ENCODE measurements at regions of chr20 and their contacts with region 1.

Region 1: DNA sequence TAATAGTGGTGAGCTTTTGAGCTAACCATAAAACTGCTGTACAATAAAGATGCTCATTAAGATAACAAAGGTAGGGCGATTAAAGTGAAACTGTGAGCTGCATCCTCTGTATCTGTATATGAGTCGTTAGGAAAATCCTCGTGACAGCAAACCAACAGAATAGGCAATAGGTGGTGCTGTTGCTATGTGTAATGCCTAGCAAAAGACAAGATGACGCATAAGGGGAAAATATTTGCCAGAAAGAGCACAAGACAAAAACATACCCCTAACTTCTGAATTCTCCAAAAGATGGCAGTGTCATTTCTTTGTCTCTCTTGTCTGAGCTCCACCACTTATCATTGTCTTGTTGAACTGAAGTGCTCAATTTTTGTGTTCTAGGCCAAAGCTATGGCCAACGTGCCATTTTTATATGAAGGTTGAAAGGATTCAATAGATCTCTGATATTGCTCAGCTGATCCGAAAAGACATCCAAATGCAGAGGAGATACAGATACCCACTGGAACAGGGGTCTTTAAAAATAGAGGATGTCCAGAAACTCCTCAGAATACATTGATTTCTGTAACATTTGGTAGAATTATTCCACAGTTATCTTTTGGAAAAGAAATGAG is 56.3 kb upstream of the ANKEF1 start:
- DNase-seq: no peak
- H3K4me3 ChIP-seq: no peak overlapping the region
- H3K27ac ChIP-seq: no peak overlapping the region
- H3K4me1 ChIP-seq: no peaks in the 10 kb centered on the region
- H3K27me3 ChIP-seq: no peaks in the 10 kb centered on the region
- CTCF ChIP-seq: peak in 2 of 3 experiments; percentile 78 to 79; a peak in 3 of 4 replicates
- EP300 ChIP-seq: no peak
- POLR2A ChIP-seq: no peak
- RAD21 ChIP-seq: peak; percentile 96 to 97

Region 2: GRCh38 chr20:9829835-9830234 is 148.7 kb before region 1 on chr20:
- CTCF ChIA-PET with region 1: no interaction called
- POLR2A ChIA-PET with region 1: no interaction called
- DNase-seq: peak in 1 of 2 experiments; percentile 45
- H3K4me3 ChIP-seq: no peak overlapping the region
- H3K27ac ChIP-seq: no peak overlapping the region
- H3K4me1 ChIP-seq: peaks cover 0 to 3% (median 1%) of the 10 kb centered on the region in 4 experiments; a peak in 4 of 7 replicates
- H3K27me3 ChIP-seq: no peaks in the 10 kb centered on the region
- CTCF ChIP-seq: no peak
- EP300 ChIP-seq: no peak
- POLR2A ChIP-seq: no peak
- RAD21 ChIP-seq: no peak

Region 3: DNA sequence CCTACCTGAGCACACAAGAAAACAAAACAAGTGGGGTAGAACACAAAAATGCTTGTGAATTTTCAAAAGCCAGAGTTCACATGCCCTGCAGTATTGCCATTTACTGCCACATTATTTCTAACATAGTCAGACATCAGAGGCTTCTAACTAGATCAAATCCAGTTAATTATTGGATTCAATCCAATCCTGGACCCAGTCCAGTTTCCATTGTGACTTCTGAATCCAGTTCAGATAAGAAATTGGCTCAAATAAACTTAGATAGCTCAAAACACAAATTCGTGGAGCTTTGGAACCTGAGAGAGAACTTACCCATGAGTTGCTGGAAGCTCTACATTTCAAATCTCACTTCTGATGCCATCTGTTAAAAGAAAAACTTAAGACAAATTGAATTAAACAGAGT is 28.9 kb before region 1 on chr20:
- CTCF ChIA-PET with region 1: interaction called, 10 read pairs
- POLR2A ChIA-PET with region 1: no interaction called
- DNase-seq: no peak
- H3K4me3 ChIP-seq: no peak overlapping the region
- H3K27ac ChIP-seq: no peak overlapping the region
- H3K4me1 ChIP-seq: no peaks in the 10 kb centered on the region
- H3K27me3 ChIP-seq: no peaks in the 10 kb centered on the region
- CTCF ChIP-seq: no peak
- EP300 ChIP-seq: no peak
- POLR2A ChIP-seq: no peak
- RAD21 ChIP-seq: no peak

Region 4: DNA sequence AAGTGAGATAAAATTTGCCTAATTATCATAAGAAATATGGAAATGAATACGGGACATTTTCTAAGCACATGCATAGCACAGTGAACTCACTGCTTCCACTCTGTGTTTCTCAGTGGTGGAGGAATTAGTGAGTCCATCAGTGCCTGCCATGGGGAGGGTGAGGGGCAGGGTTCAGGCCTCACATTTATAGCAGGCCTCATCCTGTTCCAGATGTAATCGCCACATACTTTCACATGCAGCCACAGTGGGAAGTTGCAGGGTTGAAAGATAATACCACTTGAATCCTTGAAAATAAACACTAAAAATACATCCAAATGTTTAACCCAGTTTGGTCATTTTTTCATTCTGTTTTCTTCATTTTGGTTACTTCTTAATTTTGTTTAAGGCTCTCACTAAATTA is 26.4 kb after region 1 on chr20:
- CTCF ChIA-PET with region 1: interaction called, 11 read pairs
- POLR2A ChIA-PET with region 1: no interaction called
- DNase-seq: no peak
- H3K4me3 ChIP-seq: no peak overlapping the region
- H3K27ac ChIP-seq: no peak overlapping the region
- H3K4me1 ChIP-seq: peaks cover 0 to 6% (median 1%) of the 10 kb centered on the region in 4 experiments; a peak in 3 of 7 replicates
- H3K27me3 ChIP-seq: no peaks in the 10 kb centered on the region
- CTCF ChIP-seq: no peak
- EP300 ChIP-seq: no peak
- POLR2A ChIP-seq: no peak
- RAD21 ChIP-seq: no peak

Region 5: DNA sequence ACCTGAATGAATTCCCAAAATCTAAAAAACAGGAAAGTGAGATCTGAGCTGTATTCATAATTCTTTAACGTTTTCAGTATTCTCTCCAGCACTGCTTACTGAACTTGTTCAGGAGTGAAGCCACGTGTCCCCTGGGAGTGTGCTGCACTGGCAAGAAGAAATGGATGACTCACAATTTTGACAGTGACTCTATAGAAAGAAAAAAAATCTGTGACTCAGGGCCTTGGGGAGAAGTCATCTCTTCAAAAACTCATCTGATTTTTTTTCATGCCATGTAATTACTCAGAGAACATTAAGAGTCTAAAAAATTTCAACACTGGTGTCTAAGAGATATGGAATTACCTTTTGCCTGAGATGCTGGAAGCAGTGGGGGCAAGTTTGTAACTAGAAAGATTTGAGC is 96.0 kb after region 1 on chr20:
- CTCF ChIA-PET with region 1: interaction called, 43 read pairs
- POLR2A ChIA-PET with region 1: no interaction called
- DNase-seq: no peak
- H3K4me3 ChIP-seq: no peak overlapping the region
- H3K27ac ChIP-seq: no peak overlapping the region
- H3K4me1 ChIP-seq: no peaks in the 10 kb centered on the region
- H3K27me3 ChIP-seq: peaks cover 0 to under 1% (median 0%) of the 10 kb centered on the region in 4 experiments; a peak in 1 of 7 replicates
- CTCF ChIP-seq: no peak
- EP300 ChIP-seq: no peak
- POLR2A ChIP-seq: no peak
- RAD21 ChIP-seq: no peak

Measured in H1 (cell line).